Thyroid gland (tissue), 4 donors: ENCODE measurements at regions of chr9 and their contacts with region 1.

Region 1: GRCh38 chr9:83622939-83623678 is at the start of gene IDNK:
- DNase-seq: peak; percentile 31 to 53
- H3K4me3 ChIP-seq: peak within 1 kb of the TSS; percentile 22 to 67 (median 62)
- H3K27ac ChIP-seq: peak within 1 kb of the TSS; percentile 69 to 88 (median 86)
- H3K4me1 ChIP-seq: peaks cover 7% of the 10 kb centered on the region in 2 donors
- H3K27me3 ChIP-seq: no peaks in the 10 kb centered on the region
- CTCF ChIP-seq: no peak
- POLR2A ChIP-seq: peak in 1 of 2 donors; percentile 53
- total RNA-seq, gene IDNK: 7.4 to 17.2 (median 9.4) TPM

Region 2: GRCh38 chr9:83312537-83312936 is 310.6 kb before region 1 on chr9:
- intact Hi-C with region 1: no loop called
- DNase-seq: no peak
- H3K4me3 ChIP-seq: no peak overlapping the region
- H3K27ac ChIP-seq: no peak overlapping the region
- H3K4me1 ChIP-seq: peaks cover 0 to 6% of the 10 kb centered on the region in 2 donors
- H3K27me3 ChIP-seq: no peaks in the 10 kb centered on the region
- CTCF ChIP-seq: no peak
- POLR2A ChIP-seq: no peak

Region 3: GRCh38 chr9:83707768-83708514 is 84.8 kb after region 1 on chr9 and contains the start of gene UBQLN1:
- intact Hi-C with region 1: loop called (anchors 10 kb)
- DNase-seq: peak; percentile 96 to 97
- H3K4me3 ChIP-seq: peak within 1 kb of the TSS; percentile 50 to 99 (median 93)
- H3K27ac ChIP-seq: peak within 1 kb of the TSS; percentile 96 to 99 (median 99)
- H3K4me1 ChIP-seq: peaks cover 5 to 16% of the 10 kb centered on the region in 2 donors
- H3K27me3 ChIP-seq: no peaks in the 10 kb centered on the region
- CTCF ChIP-seq: peak in 2 of 6 experiments; percentile 11 to 12
- POLR2A ChIP-seq: peak; percentile 88 to 90
- total RNA-seq, gene UBQLN1: 111 to 159 (median 123) TPM

Region 4: GRCh38 chr9:83792746-83793145 is 169.6 kb after region 1 on chr9:
- intact Hi-C with region 1: no loop called
- DNase-seq: no peak
- H3K4me3 ChIP-seq: no peak overlapping the region
- H3K27ac ChIP-seq: no peak overlapping the region
- H3K4me1 ChIP-seq: no peaks in the 10 kb centered on the region
- H3K27me3 ChIP-seq: no peaks in the 10 kb centered on the region
- CTCF ChIP-seq: no peak
- POLR2A ChIP-seq: no peak

Region 5: GRCh38 chr9:83919111-83919510 is 296.0 kb after region 1 on chr9:
- intact Hi-C with region 1: loop called (anchors 5 kb)
- DNase-seq: no peak
- H3K4me3 ChIP-seq: no peak overlapping the region
- H3K27ac ChIP-seq: no peak overlapping the region
- H3K4me1 ChIP-seq: peaks cover 9 to 16% of the 10 kb centered on the region in 2 donors
- H3K27me3 ChIP-seq: no peaks in the 10 kb centered on the region
- CTCF ChIP-seq: no peak
- POLR2A ChIP-seq: no peak